Mammary epithelial cell (primary cell): ENCODE measurements at regions of chr15 and their contacts with region 1.

Region 1: DNA sequence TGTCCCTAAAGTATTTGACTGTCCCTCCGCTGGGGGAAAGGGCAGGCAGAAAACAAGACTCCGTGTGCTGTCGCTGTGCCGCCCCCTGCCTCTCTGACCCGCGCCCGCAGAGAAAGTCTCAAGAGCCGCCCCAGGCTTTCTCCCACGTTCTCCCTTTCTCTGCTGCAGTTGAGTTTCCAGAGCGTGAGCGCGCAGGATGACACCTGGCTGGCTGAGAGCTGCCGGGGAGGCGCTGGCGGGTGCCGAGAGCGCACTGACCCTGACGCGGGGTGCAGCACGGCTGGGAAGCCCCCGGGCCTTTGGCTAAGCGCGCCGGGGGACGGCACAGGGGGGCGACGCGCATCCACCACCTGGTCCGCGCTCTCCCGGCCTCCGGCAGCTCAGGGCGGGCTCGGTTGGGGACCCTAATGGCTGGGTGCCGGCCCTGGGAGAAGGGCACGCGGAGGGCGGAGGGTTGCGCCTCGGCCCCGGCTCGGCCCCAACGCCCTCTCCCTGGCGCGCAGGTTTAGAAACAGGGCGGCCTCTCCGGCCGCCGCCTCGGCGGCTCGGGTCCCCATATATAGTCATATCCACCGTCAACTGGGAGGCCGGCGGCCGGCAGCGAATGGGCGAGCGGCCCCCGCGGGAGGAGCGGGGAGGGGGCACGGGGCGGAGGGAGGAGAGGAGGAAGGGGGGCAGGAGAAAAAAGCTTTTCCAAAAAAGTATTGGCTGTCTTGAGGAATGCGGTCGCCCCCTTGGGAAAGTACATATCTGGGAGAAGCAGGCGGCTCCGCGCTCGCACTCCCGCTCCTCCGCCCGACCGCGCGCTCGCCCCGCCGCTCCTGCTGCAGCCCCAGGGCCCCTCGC is at the start of gene TPM1:
- DNase-seq: peak; percentile 92
- H3K4me3 ChIP-seq: peak within 1 kb of the TSS; percentile 70 to 88 (median 83)
- H3K27ac ChIP-seq: peak within 1 kb of the TSS; percentile 81
- H3K4me1 ChIP-seq: peaks cover 74% of the 10 kb centered on the region
- H3K27me3 ChIP-seq: no peaks in the 10 kb centered on the region
- CTCF ChIP-seq: no peak
- total RNA-seq, gene TPM1: 463 to 1,538 TPM

Region 2: GRCh38 chr15:62625429-62626033 is 416.7 kb before region 1 on chr15:
- CTCF ChIA-PET with region 1: no interaction called
- dilution Hi-C with region 1: no loop called
- in situ Hi-C with region 1: no loop called
- intact Hi-C with region 1: no loop called
- DNase-seq: no peak
- H3K4me3 ChIP-seq: no peak overlapping the region
- H3K27ac ChIP-seq: no peak overlapping the region
- H3K4me1 ChIP-seq: peaks cover 10% of the 10 kb centered on the region
- H3K27me3 ChIP-seq: no peaks in the 10 kb centered on the region
- CTCF ChIP-seq: no peak

Region 3: DNA sequence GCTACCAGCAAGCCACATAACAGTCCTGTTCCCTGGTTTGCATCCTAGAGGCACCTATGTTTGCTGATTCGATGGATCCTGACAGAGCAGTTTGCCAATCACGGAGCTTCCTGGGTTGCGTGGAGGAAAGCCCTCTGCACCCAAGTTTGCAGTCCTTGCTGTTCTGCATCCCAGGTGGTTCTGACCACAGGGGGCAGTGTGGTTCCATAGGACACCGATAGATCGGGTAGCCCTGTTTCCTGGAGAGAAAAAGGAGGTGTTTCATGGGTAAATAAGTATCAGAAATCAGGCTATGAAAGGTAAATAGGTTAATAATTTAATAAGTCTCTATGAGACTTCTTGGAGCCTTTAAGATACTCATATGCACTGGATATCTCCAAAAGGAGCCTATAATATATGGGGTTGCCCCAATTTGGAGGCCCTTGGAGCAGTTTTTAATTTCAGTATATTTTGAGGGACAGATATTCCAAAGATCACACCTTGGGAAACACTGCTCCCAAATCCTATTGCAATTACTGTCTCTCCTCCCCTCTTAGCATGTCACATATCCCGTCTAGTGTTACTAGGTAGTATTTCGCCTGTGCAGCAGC is 194.2 kb before region 1 on chr15:
- CTCF ChIA-PET with region 1: no interaction called
- dilution Hi-C with region 1: no loop called
- in situ Hi-C with region 1: loop called (anchors 10 to 25 kb)
- intact Hi-C with region 1: loop called (anchors 1 kb)
- DNase-seq: peak; percentile 48
- H3K4me3 ChIP-seq: no peak overlapping the region
- H3K27ac ChIP-seq: no peak overlapping the region
- H3K4me1 ChIP-seq: peaks cover 23% of the 10 kb centered on the region
- H3K27me3 ChIP-seq: no peaks in the 10 kb centered on the region
- CTCF ChIP-seq: peak; percentile 71 to 81

Region 4: DNA sequence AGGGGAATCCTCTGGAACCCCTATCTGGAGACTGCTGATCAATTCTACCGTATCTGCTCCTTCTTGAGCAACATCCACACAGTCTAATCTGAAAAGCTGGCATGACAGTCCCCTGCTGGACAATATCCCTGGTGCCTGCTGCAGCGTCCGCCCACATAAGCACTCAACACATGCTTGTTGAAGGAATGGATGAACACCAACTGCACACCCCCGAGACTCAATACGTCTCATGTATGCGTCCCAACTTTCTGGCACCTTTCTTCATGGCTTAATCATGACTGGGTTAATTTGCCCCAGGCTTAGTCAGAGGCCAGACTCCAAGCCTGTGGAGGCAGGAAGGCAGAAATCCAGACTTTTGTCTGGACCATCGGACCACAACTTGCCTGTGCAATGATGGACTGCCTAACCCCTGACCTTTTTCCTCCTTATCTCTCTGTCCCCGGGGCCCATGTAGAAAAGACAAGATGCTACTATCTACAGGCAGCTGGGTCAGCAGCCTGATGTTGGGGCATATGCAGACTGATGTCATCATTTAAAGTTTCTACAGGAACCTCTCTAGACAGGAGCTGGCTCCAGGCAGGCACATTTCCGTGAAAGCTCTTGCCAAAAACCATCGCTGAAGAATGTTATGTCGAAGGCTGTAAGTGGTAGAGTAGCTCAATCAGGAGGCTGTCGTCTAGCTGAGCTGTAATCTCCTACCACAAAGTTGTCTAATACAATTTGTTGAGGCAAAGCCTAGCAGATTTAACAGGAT is 113.8 kb before region 1 on chr15:
- CTCF ChIA-PET with region 1: no interaction called
- dilution Hi-C with region 1: no loop called
- in situ Hi-C with region 1: no loop called
- intact Hi-C with region 1: loop called (anchors 2 kb)
- DNase-seq: peak; percentile 88
- H3K4me3 ChIP-seq: no peak overlapping the region
- H3K27ac ChIP-seq: peak overlapping the region; percentile 87
- H3K4me1 ChIP-seq: peaks cover 32% of the 10 kb centered on the region
- H3K27me3 ChIP-seq: no peaks in the 10 kb centered on the region
- CTCF ChIP-seq: peak; percentile 39 to 46

Region 5: GRCh38 chr15:62972814-62973213 is 69.4 kb before region 1 on chr15:
- CTCF ChIA-PET with region 1: no interaction called
- dilution Hi-C with region 1: no loop called
- in situ Hi-C with region 1: no loop called
- intact Hi-C with region 1: loop called (anchors 2 kb)
- DNase-seq: peak; percentile 80
- H3K4me3 ChIP-seq: no peak overlapping the region
- H3K27ac ChIP-seq: no peak overlapping the region
- H3K4me1 ChIP-seq: peaks cover 17% of the 10 kb centered on the region
- H3K27me3 ChIP-seq: no peaks in the 10 kb centered on the region
- CTCF ChIP-seq: no peak

Region 6: GRCh38 chr15:63019539-63020109 is 22.6 kb before region 1 on chr15:
- CTCF ChIA-PET with region 1: no interaction called
- dilution Hi-C with region 1: no loop called
- in situ Hi-C with region 1: no loop called
- intact Hi-C with region 1: loop called (anchors 1 kb)
- DNase-seq: peak; percentile 99
- H3K4me3 ChIP-seq: no peak overlapping the region
- H3K27ac ChIP-seq: peak overlapping the region; percentile 59
- H3K4me1 ChIP-seq: peaks cover 61% of the 10 kb centered on the region
- H3K27me3 ChIP-seq: no peaks in the 10 kb centered on the region
- CTCF ChIP-seq: no peak

Region 7: DNA sequence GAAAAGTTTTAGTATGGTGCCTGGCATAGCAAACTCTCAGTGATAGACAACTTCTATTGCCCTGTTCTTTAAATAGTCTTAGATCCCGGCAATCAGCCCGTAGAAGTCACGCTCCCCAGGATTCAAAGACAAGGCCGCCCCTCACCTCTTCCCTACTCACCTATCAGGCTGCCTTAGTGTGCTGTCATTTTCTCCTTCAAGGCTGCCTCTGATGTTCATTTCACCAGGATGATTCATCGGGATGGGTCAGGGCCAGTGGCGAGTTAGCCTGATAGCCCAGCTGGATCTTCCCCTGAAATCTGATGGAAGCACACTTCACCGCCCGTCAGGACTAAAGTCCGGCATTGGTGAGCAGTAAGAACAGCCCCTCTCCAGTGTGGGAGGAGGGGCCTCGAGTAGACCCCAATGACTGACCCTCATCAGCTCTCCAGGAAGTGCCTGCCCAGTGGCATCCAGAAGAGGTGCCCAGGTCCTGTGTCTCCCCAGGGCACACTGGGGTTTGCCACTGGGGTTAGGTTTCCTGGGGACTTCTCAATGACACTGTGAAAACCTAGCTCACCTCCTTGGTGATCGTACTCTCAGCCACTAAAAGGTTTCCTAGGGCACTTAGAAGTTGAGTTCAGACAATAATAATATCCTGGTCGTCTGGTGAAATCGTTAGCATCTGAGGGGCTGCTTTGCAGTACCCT is 37.9 kb after region 1 on chr15:
- CTCF ChIA-PET with region 1: no interaction called
- dilution Hi-C with region 1: no loop called
- in situ Hi-C with region 1: no loop called
- intact Hi-C with region 1: no loop called
- DNase-seq: peak; percentile 53
- H3K4me3 ChIP-seq: no peak overlapping the region
- H3K27ac ChIP-seq: no peak overlapping the region
- H3K4me1 ChIP-seq: peaks cover 12% of the 10 kb centered on the region
- H3K27me3 ChIP-seq: no peaks in the 10 kb centered on the region
- CTCF ChIP-seq: no peak

Region 8: DNA sequence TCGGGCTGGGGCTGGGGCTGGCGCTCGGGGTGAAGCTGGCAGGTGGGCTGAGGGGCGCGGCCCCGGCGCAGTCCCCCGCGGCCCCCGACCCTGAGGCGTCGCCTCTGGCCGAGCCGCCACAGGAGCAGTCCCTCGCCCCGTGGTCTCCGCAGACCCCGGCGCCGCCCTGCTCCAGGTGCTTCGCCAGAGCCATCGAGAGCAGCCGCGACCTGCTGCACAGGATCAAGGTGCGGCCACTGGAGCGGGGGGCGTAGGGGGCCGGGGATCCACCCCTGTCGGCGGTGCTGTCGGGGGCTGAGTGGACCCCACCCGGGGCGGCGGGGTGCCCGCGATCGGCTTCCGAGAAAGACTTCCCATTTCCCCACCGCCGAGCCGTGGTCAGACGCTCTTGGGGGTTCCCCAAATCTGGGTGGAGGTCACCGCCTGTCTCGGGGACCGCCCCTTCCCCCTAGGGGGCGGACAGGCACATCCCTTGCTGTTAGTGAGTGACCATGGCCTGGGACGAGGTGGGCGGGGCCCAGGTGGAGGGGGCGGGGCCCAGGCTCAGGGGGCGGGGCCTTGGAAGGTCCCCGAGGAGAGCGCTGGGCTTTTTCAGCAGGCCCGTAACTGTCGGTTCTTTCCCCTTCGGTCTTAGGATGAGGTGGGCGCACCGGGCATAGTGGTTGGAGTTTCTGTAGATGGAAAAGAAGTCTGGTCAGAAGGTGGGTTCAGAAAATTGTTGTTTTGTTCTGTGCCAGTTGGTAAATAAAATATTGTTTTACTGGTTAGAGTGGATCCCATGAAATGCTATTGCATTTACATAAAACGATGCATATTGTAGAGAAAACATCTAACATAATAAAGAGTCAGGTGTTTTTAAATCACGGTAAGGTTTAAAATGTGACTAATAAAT is 80.1 kb after region 1 on chr15:
- CTCF ChIA-PET with region 1: no interaction called
- dilution Hi-C with region 1: loop called (anchors 5 kb)
- in situ Hi-C with region 1: no loop called
- intact Hi-C with region 1: no loop called
- DNase-seq: peak; percentile 87
- H3K4me3 ChIP-seq: peak overlapping the region; percentile 81 to 99 (median 96)
- H3K27ac ChIP-seq: peak overlapping the region; percentile 70
- H3K4me1 ChIP-seq: no peaks in the 10 kb centered on the region
- H3K27me3 ChIP-seq: no peaks in the 10 kb centered on the region
- CTCF ChIP-seq: peak in 1 of 2 donors; percentile 27